Dendritic cell treated with granulocyte-macrophage colony-stimulating factor and Interleukin-4, amounts not matched to agents 40 ng/mL and 50 ng/mL, for 4 days (primary cell): ENCODE measurements at regions of chrX and their contacts with region 1.

Region 1: DNA sequence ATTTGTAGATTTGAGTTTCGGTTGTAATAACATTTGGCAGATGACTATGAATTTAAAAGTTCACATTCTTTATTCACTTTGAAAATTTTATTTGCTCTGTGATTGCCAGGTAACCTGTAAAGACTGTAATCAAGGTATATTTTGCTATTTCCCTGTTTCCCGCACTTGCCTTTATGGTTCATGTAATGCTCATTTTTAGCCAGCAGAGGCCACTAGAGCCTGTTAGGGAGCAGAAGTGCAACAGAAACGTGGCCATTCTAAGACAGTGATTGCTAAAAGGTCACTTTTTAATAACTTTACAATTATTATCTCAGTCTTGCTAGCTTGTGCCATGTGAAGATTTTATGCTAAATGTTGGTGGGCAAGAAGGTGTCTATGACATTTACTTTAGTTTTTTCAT is 12.4 kb downstream of the YIPF6 start:
- H3K4me3 Mint-ChIP-seq: no peak overlapping the region
- H3K27ac Mint-ChIP-seq: no peak overlapping the region
- H3K4me1 Mint-ChIP-seq: peaks cover 15% of the 10 kb centered on the region
- H3K27me3 Mint-ChIP-seq: no peaks in the 10 kb centered on the region

Region 2: GRCh38 chrX:68532831-68533533 is 21.7 kb after region 1 on chrX:
- intact Hi-C with region 1: no loop called
- H3K4me3 Mint-ChIP-seq: no peak overlapping the region
- H3K27ac Mint-ChIP-seq: no peak overlapping the region
- H3K4me1 Mint-ChIP-seq: no peaks in the 10 kb centered on the region
- H3K27me3 Mint-ChIP-seq: no peaks in the 10 kb centered on the region

Region 3: GRCh38 chrX:68708503-68709290 is 197.4 kb after region 1 on chrX:
- intact Hi-C with region 1: loop called (anchors 5 kb)
- H3K4me3 Mint-ChIP-seq: no peak overlapping the region
- H3K27ac Mint-ChIP-seq: no peak overlapping the region
- H3K4me1 Mint-ChIP-seq: peaks cover 66% of the 10 kb centered on the region
- H3K27me3 Mint-ChIP-seq: no peaks in the 10 kb centered on the region

Region 4: DNA sequence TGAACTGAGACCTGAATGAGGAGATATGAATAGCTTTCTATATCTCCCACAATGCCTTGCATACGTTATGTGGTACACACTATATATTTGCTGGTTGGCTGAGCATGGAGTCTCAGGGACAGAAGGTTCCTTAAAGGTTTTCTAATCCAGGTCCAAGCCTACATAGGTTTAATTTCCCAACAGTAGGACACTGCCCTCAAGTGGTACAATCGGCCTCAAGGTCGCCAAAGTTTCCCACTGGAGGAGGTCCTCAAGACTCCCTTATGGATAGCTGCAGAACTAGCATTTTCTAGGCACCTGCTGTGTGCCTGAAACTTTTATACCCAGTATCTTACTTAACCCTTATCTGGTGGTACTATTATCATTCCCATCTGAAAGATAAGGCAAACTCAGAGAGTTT is 296.6 kb after region 1 on chrX:
- intact Hi-C with region 1: loop called (anchors 5 kb)
- H3K4me3 Mint-ChIP-seq: no peak overlapping the region
- H3K27ac Mint-ChIP-seq: no peak overlapping the region
- H3K4me1 Mint-ChIP-seq: no peaks in the 10 kb centered on the region
- H3K27me3 Mint-ChIP-seq: peaks cover 8% of the 10 kb centered on the region